Caco-2 (cell line): ENCODE measurements at regions of chr4 and their contacts with region 1.

Region 1: GRCh38 chr4:46886711-46887110 is 22.3 kb downstream of the COX7B2 start:
- DNase-seq: peak in 1 of 2 experiments; percentile 32
- H3K4me3 ChIP-seq: no peak overlapping the region
- H3K4me3 Mint-ChIP-seq: no peak overlapping the region
- H3K27ac Mint-ChIP-seq: peak overlapping the region; percentile 72
- H3K4me1 ChIP-seq: peaks cover 49% of the 10 kb centered on the region
- H3K4me1 Mint-ChIP-seq: peaks cover 29% of the 10 kb centered on the region
- H3K27me3 ChIP-seq: no peaks in the 10 kb centered on the region
- H3K27me3 Mint-ChIP-seq: no peaks in the 10 kb centered on the region
- CTCF ChIP-seq: peak; percentile 29 to 32

Region 2: GRCh38 chr4:46720055-46720454 is 166.7 kb before region 1 on chr4:
- CTCF ChIA-PET with region 1: no interaction called
- POLR2A ChIA-PET with region 1: no interaction called
- intact Hi-C with region 1: no loop called
- DNase-seq: no peak
- H3K4me3 ChIP-seq: no peak overlapping the region
- H3K4me3 Mint-ChIP-seq: no peak overlapping the region
- H3K27ac Mint-ChIP-seq: no peak overlapping the region
- H3K4me1 ChIP-seq: no peaks in the 10 kb centered on the region
- H3K4me1 Mint-ChIP-seq: no peaks in the 10 kb centered on the region
- H3K27me3 ChIP-seq: no peaks in the 10 kb centered on the region
- H3K27me3 Mint-ChIP-seq: no peaks in the 10 kb centered on the region
- CTCF ChIP-seq: no peak

Region 3: DNA sequence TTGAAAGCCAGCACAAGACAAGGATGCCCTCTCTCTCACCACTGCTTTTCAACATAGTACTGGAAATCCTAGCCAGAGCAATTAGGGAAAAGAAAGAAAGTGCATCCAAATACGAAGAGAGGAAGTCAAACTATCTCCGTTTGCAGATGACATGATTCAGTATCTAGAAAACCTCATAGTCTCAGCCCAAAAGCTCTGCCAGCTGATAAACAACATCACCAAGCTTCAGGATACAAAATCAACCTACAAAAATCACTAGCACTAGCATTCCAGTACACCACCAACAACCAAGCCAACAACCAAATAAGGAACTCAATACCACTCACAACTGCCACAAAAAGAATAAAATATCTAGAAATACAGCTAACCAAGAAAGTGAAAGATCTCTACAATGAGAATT is 16.3 kb before region 1 on chr4:
- CTCF ChIA-PET with region 1: no interaction called
- POLR2A ChIA-PET with region 1: no interaction called
- intact Hi-C with region 1: loop called (anchors 1 kb)
- DNase-seq: no peak
- H3K4me3 ChIP-seq: no peak overlapping the region
- H3K4me3 Mint-ChIP-seq: no peak overlapping the region
- H3K27ac Mint-ChIP-seq: no peak overlapping the region
- H3K4me1 ChIP-seq: peaks cover 20% of the 10 kb centered on the region
- H3K4me1 Mint-ChIP-seq: peaks cover 25% of the 10 kb centered on the region
- H3K27me3 ChIP-seq: no peaks in the 10 kb centered on the region
- H3K27me3 Mint-ChIP-seq: no peaks in the 10 kb centered on the region
- CTCF ChIP-seq: no peak

Region 4: GRCh38 chr4:47002593-47002992 is 115.9 kb after region 1 on chr4:
- CTCF ChIA-PET with region 1: no interaction called
- POLR2A ChIA-PET with region 1: no interaction called
- intact Hi-C with region 1: loop called (anchors 5 kb)
- DNase-seq: peak in 1 of 2 experiments; percentile 7
- H3K4me3 ChIP-seq: no peak overlapping the region
- H3K4me3 Mint-ChIP-seq: no peak overlapping the region
- H3K27ac Mint-ChIP-seq: no peak overlapping the region
- H3K4me1 ChIP-seq: peaks cover 4% of the 10 kb centered on the region; the same call in 1 of the 2 replicates
- H3K4me1 Mint-ChIP-seq: peaks cover 4% of the 10 kb centered on the region
- H3K27me3 ChIP-seq: no peaks in the 10 kb centered on the region
- H3K27me3 Mint-ChIP-seq: no peaks in the 10 kb centered on the region
- CTCF ChIP-seq: peak; percentile 42 to 53